Prostate gland (tissue), 2 donors: ENCODE measurements at regions of chr4 and their contacts with region 1.

Region 1: GRCh38 chr4:128191115-128191781 is 96.4 kb downstream of the PGRMC2 start:
- DNase-seq: peak; percentile 61
- H3K4me3 ChIP-seq: no peak overlapping the region
- H3K27ac ChIP-seq: no peak overlapping the region
- H3K4me1 ChIP-seq: no peaks in the 10 kb centered on the region
- H3K27me3 ChIP-seq: no peaks in the 10 kb centered on the region
- CTCF ChIP-seq: peak; percentile 41 to 82 (median 78)
- POLR2A ChIP-seq: no peak

Region 2: DNA sequence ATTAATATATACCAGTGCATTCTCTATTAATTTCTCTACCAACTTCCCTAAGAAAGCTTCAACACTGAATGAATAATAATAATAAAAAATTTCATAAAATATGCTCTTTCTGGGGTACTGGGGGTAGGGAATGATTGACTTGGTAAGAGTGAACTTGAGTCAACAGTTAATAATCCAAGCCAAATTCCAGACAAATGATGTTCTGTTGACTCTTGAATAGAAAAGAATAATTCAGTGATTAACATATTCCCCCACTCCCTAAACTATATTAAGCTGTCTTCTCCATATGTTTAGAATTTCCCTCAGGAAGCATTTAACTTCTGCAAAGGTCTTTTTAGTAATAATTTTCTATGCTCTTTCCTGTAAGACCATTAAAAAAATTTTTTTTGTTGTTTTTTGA is 84.1 kb after region 1 on chr4:
- intact Hi-C with region 1: no loop called
- DNase-seq: no peak
- H3K4me3 ChIP-seq: no peak overlapping the region
- H3K27ac ChIP-seq: no peak overlapping the region
- H3K4me1 ChIP-seq: no peaks in the 10 kb centered on the region
- H3K27me3 ChIP-seq: no peaks in the 10 kb centered on the region
- CTCF ChIP-seq: no peak
- POLR2A ChIP-seq: no peak

Region 3: GRCh38 chr4:128558896-128559679 is 367.8 kb after region 1 on chr4:
- intact Hi-C with region 1: loop called (anchors 5 kb)
- DNase-seq: peak; percentile 34
- H3K4me3 ChIP-seq: no peak overlapping the region
- H3K27ac ChIP-seq: peak overlapping the region; percentile 39 to 46
- H3K4me1 ChIP-seq: no peaks in the 10 kb centered on the region
- H3K27me3 ChIP-seq: no peaks in the 10 kb centered on the region
- CTCF ChIP-seq: no peak
- POLR2A ChIP-seq: no peak